ENCODE measurements at regions of chr15 and their contacts with region 1.

Region 1: DNA sequence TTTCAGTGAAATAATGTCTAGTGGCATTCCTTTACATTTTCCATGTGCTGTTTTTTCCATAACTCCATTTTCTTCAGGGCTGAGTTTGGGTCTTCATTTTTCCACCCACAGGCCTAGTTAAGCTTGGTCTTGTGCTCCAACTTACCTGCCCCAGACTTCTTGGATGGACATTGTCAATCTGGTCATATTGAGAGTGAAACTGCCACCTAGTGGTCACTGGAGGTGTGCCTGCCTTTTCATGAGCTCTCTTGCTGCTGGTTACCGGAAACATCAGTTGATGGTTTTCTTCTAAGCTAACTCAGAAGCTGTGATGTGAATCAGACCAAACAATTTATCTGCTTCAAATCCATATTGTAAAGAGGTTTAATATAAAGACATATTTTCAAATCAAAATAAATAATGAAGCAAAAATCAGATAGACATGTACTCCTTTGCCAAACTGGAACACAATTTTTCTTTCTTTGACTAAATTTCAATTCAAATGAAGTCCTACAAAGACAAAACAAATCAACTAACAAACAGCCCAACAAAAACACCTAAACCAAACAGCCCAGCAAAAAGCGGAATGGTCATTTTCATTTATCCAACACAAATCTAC is 135.1 kb upstream of the RASGRP1 start:
- DNase-seq: peak; percentile 72
- H3K4me3 Mint-ChIP-seq: no peak overlapping the region
- H3K27ac Mint-ChIP-seq: no peak overlapping the region
- H3K4me1 Mint-ChIP-seq: no peaks in the 10 kb centered on the region
- H3K27me3 Mint-ChIP-seq: no peaks in the 10 kb centered on the region
- CTCF ChIP-seq: peak; percentile 68

Region 2: DNA sequence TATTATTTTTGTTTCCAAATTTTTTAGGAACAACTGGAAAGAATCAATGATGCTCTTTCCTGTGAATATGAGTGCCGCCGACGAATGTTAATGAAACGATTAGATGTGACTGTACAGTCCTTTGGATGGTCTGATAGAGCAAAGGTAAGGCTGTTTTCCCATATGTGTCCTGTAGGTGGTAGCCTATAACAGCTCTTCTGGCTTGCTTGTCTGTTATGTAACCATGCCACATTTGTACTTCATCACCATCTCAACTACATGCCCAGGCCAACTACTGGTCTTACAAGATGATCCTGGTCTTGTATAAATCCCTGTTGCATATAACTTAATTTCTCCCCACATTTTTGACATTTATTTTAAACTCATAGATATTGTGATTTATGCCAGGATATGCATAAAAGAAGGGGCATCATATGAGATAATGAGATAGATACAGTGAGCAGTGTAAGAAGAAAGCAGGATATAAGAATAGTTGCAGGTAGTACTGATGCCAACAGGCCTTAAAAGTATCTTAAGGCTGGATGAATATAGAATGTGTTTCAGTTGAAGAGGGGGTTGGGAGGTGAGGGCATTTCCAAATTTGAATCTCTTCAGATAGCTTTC is 225.5 kb before region 1 on chr15:
- CTCF ChIA-PET with region 1: interaction called, 21 read pairs
- POLR2A ChIA-PET with region 1: no interaction called
- intact Hi-C with region 1: no loop called
- DNase-seq: peak; percentile 61
- H3K4me3 Mint-ChIP-seq: no peak overlapping the region
- H3K27ac Mint-ChIP-seq: no peak overlapping the region
- H3K4me1 Mint-ChIP-seq: peaks cover 6% of the 10 kb centered on the region
- H3K27me3 Mint-ChIP-seq: no peaks in the 10 kb centered on the region
- CTCF ChIP-seq: peak; percentile 63

Region 3: GRCh38 chr15:38486936-38487335 is 212.8 kb before region 1 on chr15:
- CTCF ChIA-PET with region 1: interaction called, 11 read pairs
- POLR2A ChIA-PET with region 1: no interaction called
- intact Hi-C with region 1: no loop called
- DNase-seq: no peak
- H3K4me3 Mint-ChIP-seq: no peak overlapping the region
- H3K27ac Mint-ChIP-seq: no peak overlapping the region
- H3K4me1 Mint-ChIP-seq: no peaks in the 10 kb centered on the region
- H3K27me3 Mint-ChIP-seq: no peaks in the 10 kb centered on the region
- CTCF ChIP-seq: no peak

Region 4: DNA sequence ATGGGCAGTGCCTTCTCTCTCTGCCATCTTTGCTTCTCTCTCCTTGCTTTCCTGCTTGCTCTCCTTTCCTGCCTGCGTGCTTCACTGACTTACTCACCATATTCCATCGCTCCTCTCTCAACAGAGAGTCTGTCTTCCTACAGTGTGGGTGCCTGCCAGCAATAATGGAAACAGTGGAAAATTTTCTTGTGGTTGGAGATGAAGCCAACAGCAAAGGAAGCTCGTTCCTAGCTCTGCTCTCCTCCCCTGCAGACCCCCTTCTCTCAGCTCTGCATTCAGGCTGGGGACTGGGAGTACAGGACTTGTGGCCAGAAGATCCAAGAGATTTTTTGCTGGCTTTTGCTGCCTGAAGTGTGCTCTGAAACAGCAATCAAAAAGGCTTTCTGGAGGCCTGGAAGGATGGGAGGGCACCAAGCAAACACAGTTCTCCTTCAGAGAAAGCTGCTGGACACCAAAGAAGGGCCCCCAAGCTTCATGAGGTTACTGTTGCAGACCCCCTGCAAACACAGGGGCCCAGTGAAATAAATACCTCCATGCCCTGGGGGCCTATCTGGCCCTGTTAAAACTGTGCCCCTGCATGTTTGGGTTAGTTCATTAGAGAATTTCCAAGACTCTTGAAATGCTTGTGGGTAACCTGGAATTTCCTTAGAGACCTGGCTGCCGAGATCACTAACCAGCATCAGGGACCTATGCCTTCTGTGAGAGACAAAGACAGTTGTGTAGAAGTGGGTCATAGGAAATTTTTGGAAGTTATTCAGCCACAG is 14.8 kb after region 1 on chr15:
- CTCF ChIA-PET with region 1: interaction called, 45 read pairs
- POLR2A ChIA-PET with region 1: interaction called, 3 read pairs
- intact Hi-C with region 1: no loop called
- DNase-seq: peak; percentile 73
- H3K4me3 Mint-ChIP-seq: no peak overlapping the region
- H3K27ac Mint-ChIP-seq: peak overlapping the region; percentile 20
- H3K4me1 Mint-ChIP-seq: peaks cover 6% of the 10 kb centered on the region
- H3K27me3 Mint-ChIP-seq: no peaks in the 10 kb centered on the region
- CTCF ChIP-seq: no peak

Region 5: GRCh38 chr15:38768970-38769369 is 69.2 kb after region 1 on chr15:
- CTCF ChIA-PET with region 1: no interaction called
- POLR2A ChIA-PET with region 1: no interaction called
- intact Hi-C with region 1: no loop called
- DNase-seq: peak; percentile 6
- H3K4me3 Mint-ChIP-seq: no peak overlapping the region
- H3K27ac Mint-ChIP-seq: no peak overlapping the region
- H3K4me1 Mint-ChIP-seq: no peaks in the 10 kb centered on the region
- H3K27me3 Mint-ChIP-seq: peaks cover 20% of the 10 kb centered on the region
- CTCF ChIP-seq: no peak

Region 6: DNA sequence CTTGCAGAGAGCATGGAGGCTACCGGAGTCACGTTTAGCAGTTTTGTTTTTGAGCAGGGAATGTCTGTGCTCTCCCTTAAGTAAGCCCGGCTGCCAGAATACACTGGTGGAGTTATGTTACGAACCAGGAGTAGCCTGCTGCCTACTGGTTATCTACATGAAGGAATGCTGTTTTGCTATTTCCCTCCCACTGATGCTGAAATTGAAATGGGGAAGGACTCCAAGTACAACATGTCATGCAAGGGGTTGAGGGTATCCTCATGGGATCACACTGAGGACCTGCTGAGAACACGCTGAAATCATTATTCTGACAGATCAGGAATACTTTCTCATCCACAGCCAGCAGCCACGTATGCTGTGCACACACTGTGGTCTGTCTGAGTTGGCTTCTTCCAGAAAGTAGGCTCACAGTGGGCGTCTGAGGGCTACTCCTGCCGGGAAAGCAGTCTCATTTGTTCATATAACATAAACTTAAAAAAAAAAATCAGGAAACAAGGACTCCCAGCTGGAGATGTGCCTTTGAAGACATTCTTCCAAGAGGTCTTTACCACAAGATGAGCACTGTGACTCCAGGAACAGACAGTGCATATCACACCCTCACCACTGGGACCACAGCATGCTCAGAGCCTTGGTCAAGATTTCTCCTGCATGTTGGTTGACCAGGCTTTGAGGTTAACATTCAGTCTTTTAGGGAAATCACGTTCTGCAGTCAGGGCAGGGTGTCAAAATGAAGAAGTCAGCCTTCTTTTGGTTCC is 165.3 kb after region 1 on chr15:
- CTCF ChIA-PET with region 1: no interaction called
- POLR2A ChIA-PET with region 1: no interaction called
- intact Hi-C with region 1: no loop called
- DNase-seq: no peak
- H3K4me3 Mint-ChIP-seq: no peak overlapping the region
- H3K27ac Mint-ChIP-seq: no peak overlapping the region
- H3K4me1 Mint-ChIP-seq: peaks cover 8% of the 10 kb centered on the region
- H3K27me3 Mint-ChIP-seq: no peaks in the 10 kb centered on the region
- CTCF ChIP-seq: no peak

Region 7: DNA sequence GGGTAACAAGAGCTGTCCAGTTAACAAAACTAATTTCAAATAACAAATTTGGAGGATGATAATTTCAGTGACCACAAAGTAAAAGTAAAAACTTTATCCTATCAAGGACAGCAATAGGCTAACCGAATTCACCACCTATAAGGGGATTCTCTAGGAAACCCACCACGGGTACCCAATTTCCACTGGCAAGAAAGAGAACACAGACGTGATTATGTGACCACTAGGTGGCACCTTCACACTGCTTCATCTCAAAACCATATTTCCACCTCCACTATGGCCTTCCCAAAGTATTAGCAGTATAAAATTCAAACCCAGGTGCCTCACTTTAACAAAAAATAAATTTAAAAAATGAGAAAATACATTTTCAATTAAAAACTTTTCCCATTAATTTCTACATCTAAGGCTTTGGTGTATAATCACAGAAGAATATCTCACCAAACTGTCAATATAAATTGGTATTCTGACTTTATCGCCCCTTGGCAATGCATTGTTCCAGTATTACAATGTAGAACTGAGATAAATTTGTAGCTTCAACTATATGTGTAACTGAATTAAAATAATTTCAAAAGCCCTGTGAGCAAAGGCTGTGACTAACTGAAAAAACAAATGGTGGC is 986.4 kb after region 1 on chr15:
- CTCF ChIA-PET with region 1: no interaction called
- POLR2A ChIA-PET with region 1: no interaction called
- intact Hi-C with region 1: loop called (anchors 10 kb)
- DNase-seq: peak; percentile 62
- H3K4me3 Mint-ChIP-seq: no peak overlapping the region
- H3K27ac Mint-ChIP-seq: no peak overlapping the region
- H3K4me1 Mint-ChIP-seq: no peaks in the 10 kb centered on the region
- H3K27me3 Mint-ChIP-seq: no peaks in the 10 kb centered on the region
- CTCF ChIP-seq: peak; percentile 67

Measured in MCF 10A (cell line).